PC-9 (cell line): ENCODE measurements at regions of chr3 and their contacts with region 1.

Region 1: DNA sequence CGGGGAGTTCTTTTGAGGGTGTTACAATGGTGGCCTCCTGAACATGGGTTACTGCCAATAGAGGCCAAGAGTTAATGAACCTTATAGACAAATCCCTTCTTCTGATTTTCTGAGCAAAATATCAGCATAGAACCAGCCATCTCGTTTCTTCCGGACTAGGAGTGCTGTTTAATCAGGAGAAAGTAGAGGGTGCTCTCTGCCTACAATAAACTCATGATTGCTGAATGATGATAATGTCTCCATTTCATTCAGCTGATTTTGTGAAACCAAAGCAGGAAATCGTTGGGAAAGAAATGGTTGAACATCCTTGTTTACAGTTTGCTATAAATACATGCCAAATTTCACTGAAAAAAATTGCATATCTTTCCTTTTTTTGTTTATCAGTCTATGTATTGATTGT is 142.8 kb upstream of the PLSCR5 start:
- DNase-seq: no peak
- H3K4me3 ChIP-seq: no peak overlapping the region
- H3K27ac ChIP-seq: no peak overlapping the region
- H3K4me1 ChIP-seq: no peaks in the 10 kb centered on the region
- H3K27me3 ChIP-seq: no peaks in the 10 kb centered on the region
- CTCF ChIP-seq: no peak

Region 2: GRCh38 chr3:146827391-146827790 is 79.5 kb after region 1 on chr3:
- CTCF ChIA-PET with region 1: no interaction called
- POLR2A ChIA-PET with region 1: no interaction called
- intact Hi-C with region 1: no loop called
- DNase-seq: no peak
- H3K4me3 ChIP-seq: no peak overlapping the region
- H3K27ac ChIP-seq: no peak overlapping the region
- H3K4me1 ChIP-seq: no peaks in the 10 kb centered on the region
- H3K27me3 ChIP-seq: no peaks in the 10 kb centered on the region
- CTCF ChIP-seq: no peak

Region 3: GRCh38 chr3:147514366-147515160 is 766.6 kb after region 1 on chr3:
- CTCF ChIA-PET with region 1: no interaction called
- POLR2A ChIA-PET with region 1: no interaction called
- intact Hi-C with region 1: loop called (anchors 5 kb)
- DNase-seq: no peak
- H3K4me3 ChIP-seq: no peak overlapping the region
- H3K27ac ChIP-seq: no peak overlapping the region
- H3K4me1 ChIP-seq: no peaks in the 10 kb centered on the region
- H3K27me3 ChIP-seq: no peaks in the 10 kb centered on the region
- CTCF ChIP-seq: no peak